Caco-2 (cell line): ENCODE measurements at regions of chr16 and their contacts with region 1.

Region 1: GRCh38 chr16:70257391-70257790 is 5.7 kb upstream of the EXOSC6 start:
- DNase-seq: no peak
- H3K4me3 ChIP-seq: no peak overlapping the region
- H3K4me3 Mint-ChIP-seq: no peak overlapping the region
- H3K27ac Mint-ChIP-seq: no peak overlapping the region
- H3K4me1 ChIP-seq: no peaks in the 10 kb centered on the region
- H3K4me1 Mint-ChIP-seq: no peaks in the 10 kb centered on the region
- H3K27me3 ChIP-seq: no peaks in the 10 kb centered on the region
- H3K27me3 Mint-ChIP-seq: no peaks in the 10 kb centered on the region
- CTCF ChIP-seq: no peak

Region 2: DNA sequence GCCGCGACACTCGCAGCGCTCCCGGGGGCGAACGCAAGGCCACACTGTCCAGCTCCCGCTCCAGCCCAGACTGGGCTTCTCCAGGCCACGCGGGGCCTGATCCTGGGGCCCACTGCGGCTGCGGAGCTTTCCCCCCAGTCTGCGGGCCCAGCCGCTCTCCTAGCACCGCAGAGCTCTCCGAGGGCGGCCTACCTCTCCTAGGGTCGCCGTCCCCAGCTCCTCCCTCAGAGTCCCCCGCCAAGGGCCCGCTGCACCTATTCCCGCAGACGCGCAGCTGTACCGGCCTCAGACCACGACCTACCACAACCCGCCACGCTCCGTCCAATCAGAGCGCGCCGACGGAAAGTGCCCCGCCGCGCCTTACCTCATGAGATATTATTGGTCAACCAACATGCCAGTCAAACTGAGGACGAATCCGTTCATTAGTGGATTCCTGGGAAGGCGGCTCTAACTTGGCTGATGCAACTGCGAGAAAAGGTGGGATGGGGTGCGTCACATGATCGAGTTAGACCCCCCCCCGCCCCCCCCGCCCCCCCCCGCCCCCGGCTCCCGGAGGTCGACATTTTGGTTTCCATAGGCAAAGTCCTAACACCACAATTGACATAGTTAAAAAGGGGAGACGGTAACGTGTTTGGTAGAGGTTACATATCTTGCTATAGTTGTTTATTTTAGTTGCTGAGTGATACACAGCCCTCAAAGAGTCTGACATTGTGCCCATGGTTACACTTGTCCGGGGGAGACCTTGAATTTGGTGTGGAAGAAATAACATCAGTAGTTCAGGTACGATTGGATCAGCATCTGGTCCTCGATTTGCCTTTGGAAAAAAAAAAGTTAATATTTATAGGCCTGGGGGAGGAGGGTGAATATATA is 32.1 kb after region 1 on chr16 and contains the start of gene AARS1:
- CTCF ChIA-PET with region 1: interaction called, 4 read pairs
- POLR2A ChIA-PET with region 1: interaction called, 11 read pairs
- intact Hi-C with region 1: no loop called
- DNase-seq: peak; percentile 100
- H3K4me3 ChIP-seq: peak within 1 kb of the TSS; percentile 83
- H3K4me3 Mint-ChIP-seq: peak within 1 kb of the TSS; percentile 92
- H3K27ac Mint-ChIP-seq: peak within 1 kb of the TSS; percentile 99
- H3K4me1 ChIP-seq: no peaks in the 10 kb centered on the region
- H3K4me1 Mint-ChIP-seq: no peaks in the 10 kb centered on the region
- H3K27me3 ChIP-seq: no peaks in the 10 kb centered on the region
- H3K27me3 Mint-ChIP-seq: no peaks in the 10 kb centered on the region
- CTCF ChIP-seq: peak in 1 of 2 experiments; percentile 1
- total RNA-seq, gene AARS1: 366 and 449 TPM in 2 replicates